Lower leg skin (tissue), 4 donors: ENCODE measurements at regions of chr1 and their contacts with region 1.

Region 1: DNA sequence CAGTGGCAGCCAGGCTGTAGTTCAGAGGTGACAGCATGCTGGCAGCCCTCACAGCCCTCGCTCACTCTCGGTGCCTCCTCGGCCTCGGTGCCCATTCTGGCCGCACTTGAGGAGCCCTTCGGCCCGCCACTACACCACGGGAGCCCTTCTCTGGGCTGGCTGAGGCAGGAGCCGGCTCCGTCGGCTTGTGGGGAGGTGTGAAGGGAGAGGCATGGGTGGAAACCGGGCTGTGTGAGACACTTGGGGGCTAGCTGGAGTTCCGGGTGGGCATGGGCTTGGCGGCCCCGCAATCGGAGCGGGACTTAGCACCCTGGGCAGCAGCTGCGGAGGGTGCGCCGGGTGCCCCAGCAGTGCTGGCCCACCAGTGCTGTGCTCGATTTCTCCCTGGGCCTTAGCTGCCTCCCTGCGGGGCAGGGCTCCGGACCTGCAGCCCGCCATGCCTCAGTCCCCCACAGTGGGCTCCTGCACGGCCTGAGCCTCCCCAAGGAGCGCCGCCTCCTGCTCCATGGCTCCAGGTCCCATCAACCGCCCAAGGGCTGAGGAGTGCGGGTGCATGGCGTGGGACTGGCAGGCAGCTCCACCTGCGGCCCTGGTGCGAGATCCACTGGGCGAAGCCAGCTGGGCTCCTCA is 396.8 kb downstream of the FAM72C start:
- DNase-seq: peak in 1 of 2 donors; percentile 61
- H3K4me3 ChIP-seq: no peak overlapping the region
- CTCF ChIP-seq: no peak
- POLR2A ChIP-seq: no peak

Region 2: GRCh38 chr1:143636211-143636610 is 61.2 kb after region 1 on chr1:
- intact Hi-C with region 1: loop called (anchors 10 kb)
- DNase-seq: no peak
- H3K4me3 ChIP-seq: no peak overlapping the region
- CTCF ChIP-seq: no peak
- POLR2A ChIP-seq: no peak